Motor neuron (in vitro differentiated cells): ENCODE measurements at regions of chr9 and their contacts with region 1.

Region 1: GRCh38 chr9:136093995-136094881 is 851 bp downstream of the NACC2 start:
- ATAC-seq: peak; percentile 24 to 47 (median 30)
- H3K4me3 ChIP-seq: peak overlapping the region; percentile 61 to 83 (median 73)
- H3K27ac ChIP-seq: peak overlapping the region in 1 of 2 donors; percentile 8
- H3K4me1 ChIP-seq: peaks cover 19 to 36% of the 10 kb centered on the region in 2 donors

Region 2: GRCh38 chr9:135992486-135993408 is 101.5 kb before region 1 on chr9:
- in situ Hi-C with region 1: loop called in 1 of 9 experiments (anchors 25 kb)
- ATAC-seq: peak; percentile 77 to 89 (median 82)
- H3K4me3 ChIP-seq: peak overlapping the region in 3 of 5 donors; percentile 10 to 17 (median 16)
- H3K27ac ChIP-seq: peak overlapping the region; percentile 91 to 95
- H3K4me1 ChIP-seq: peaks cover 75 to 84% of the 10 kb centered on the region in 2 donors